Tibial artery (tissue), 4 donors: ENCODE measurements at regions of chr1 and their contacts with region 1.

Region 1: GRCh38 chr1:51131185-51131584 is 29.2 kb downstream of the C1orf185 start:
- DNase-seq: no peak
- H3K4me3 ChIP-seq: no peak overlapping the region
- H3K27ac ChIP-seq: no peak overlapping the region
- H3K4me1 ChIP-seq: no peaks in the 10 kb centered on the region
- H3K27me3 ChIP-seq: no peaks in the 10 kb centered on the region
- CTCF ChIP-seq: no peak

Region 2: DNA sequence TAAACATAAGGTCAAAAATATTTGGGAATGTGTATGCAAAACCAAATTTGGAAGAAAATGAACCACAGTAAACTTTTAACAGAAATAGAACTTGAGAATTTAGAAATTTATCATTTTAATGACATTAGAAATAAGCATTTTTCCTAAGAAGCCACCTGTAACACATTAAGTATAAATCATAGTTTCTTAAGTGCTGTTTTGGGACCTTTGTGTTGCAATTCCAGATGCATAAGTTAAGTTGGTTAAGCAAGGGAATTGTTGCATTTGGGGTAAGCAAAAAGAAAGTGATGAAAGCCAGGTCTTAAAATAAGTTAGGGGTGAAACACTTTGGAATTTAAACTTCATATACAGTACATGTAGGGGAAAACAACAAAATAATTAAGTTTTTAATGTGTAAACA is 111.4 kb before region 1 on chr1:
- intact Hi-C with region 1: no loop called
- DNase-seq: no peak
- H3K4me3 ChIP-seq: no peak overlapping the region
- H3K27ac ChIP-seq: no peak overlapping the region
- H3K4me1 ChIP-seq: no peaks in the 10 kb centered on the region
- H3K27me3 ChIP-seq: no peaks in the 10 kb centered on the region
- CTCF ChIP-seq: no peak

Region 3: GRCh38 chr1:52334906-52335528 is 1203.8 kb after region 1 on chr1:
- intact Hi-C with region 1: loop called (anchors 5 kb)
- DNase-seq: no peak
- H3K4me3 ChIP-seq: no peak overlapping the region
- H3K27ac ChIP-seq: no peak overlapping the region
- H3K4me1 ChIP-seq: no peaks in the 10 kb centered on the region
- H3K27me3 ChIP-seq: no peaks in the 10 kb centered on the region
- CTCF ChIP-seq: no peak